A549 (cell line): ENCODE measurements at regions of chr9 and their contacts with region 1.

Region 1: GRCh38 chr9:129495534-129496325 is 125.2 kb downstream of the C9orf50 start:
- DNase-seq: peak; percentile 95 to 97
- ATAC-seq: peak; percentile 63 to 76
- H3K4me3 ChIP-seq: peak overlapping the region; percentile 63
- H3K27ac ChIP-seq: peak overlapping the region; percentile 99 to 100
- H3K4me1 ChIP-seq: peaks cover 86% of the 10 kb centered on the region
- CTCF ChIP-seq: no peak
- EP300 ChIP-seq: peak; percentile 27 to 42; a peak in 1 of 5 replicates
- POLR2A ChIP-seq: no peak; the same call in 1 of the 2 replicates
- RAD21 ChIP-seq: peak; percentile 14 to 50; a peak in 3 of 5 replicates

Region 2: DNA sequence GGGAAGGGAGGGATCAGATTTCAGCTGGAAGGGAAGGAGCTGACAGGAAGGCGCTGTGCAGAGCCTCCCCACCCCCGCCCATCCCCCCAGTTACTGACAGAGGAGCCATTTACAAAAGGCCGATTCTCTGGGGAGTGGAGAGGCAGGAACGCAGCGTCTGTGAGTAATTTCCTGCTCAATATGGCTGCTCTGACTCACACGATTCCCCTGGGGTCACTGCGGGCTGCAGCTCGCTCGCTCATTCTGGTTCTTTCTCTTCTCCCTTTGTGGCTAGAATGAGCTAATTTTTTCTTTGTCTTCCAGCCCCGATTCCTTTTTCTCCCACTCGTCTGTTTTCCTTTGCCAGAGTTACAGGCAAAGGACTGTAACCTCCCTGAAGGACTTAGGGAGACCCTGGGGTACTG is 355.7 kb before region 1 on chr9:
- CTCF ChIA-PET with region 1: interaction called, 17 read pairs
- POLR2A ChIA-PET with region 1: interaction called, 12 read pairs
- DNase-seq: peak; percentile 95 to 97
- ATAC-seq: peak; percentile 81 to 82
- H3K4me3 ChIP-seq: peak overlapping the region; percentile 44
- H3K27ac ChIP-seq: peak overlapping the region; percentile 99
- H3K4me1 ChIP-seq: peaks cover 60% of the 10 kb centered on the region
- CTCF ChIP-seq: no peak
- EP300 ChIP-seq: peak in 1 of 2 experiments; percentile 62; a peak in 1 of 5 replicates
- POLR2A ChIP-seq: peak; percentile 45
- RAD21 ChIP-seq: peak in 1 of 2 experiments; percentile 30; a peak in 2 of 5 replicates

Region 3: DNA sequence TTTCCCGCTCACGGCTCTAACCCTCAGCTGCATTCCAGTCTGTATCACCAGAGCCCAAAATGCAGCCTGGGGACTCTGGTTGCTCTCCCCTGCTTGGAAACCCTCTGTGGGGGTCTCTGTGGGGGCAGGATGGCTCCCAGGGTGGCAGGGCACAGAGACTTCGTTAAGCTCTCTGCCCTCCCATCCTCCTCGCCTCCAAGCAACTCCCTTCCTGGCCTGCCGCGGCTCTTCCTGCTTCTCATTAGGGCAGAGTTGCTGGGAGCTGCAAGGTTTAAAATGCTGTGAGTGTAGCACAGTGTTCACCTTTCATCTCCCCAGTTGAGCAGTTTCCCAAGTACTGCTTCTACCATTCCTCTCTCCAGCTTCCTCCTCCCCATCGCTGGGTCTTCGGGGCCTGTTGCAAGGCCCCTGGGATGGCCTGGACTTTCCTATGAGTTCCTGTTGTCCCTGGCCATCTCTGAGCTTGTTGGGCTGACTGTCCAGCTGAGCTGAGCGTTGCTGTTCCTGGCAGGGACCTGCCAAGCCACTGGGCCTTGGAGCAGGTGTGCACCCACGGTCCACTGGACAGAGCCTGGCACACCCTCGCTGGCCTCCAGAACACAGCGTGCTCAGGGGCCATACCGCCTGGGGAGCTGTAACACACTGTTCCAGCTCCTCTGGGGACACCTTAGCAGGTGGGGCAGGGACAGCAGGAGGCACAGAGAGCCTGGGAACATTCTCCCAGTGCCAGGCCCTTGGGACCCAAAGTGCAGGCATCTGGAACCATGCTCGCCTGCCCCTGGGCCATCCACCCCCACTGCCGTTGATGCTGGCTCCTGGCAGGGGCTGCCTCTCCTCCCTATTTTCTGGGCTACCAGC is 63.2 kb before region 1 on chr9:
- CTCF ChIA-PET with region 1: no interaction called
- POLR2A ChIA-PET with region 1: no interaction called
- DNase-seq: no peak
- ATAC-seq: no peak
- H3K4me3 ChIP-seq: no peak overlapping the region
- H3K27ac ChIP-seq: peak overlapping the region; percentile 61 to 69; a peak in 4 of 6 replicates
- H3K4me1 ChIP-seq: peaks cover 1% of the 10 kb centered on the region
- CTCF ChIP-seq: no peak
- EP300 ChIP-seq: no peak
- POLR2A ChIP-seq: no peak
- RAD21 ChIP-seq: no peak

Region 4: GRCh38 chr9:129460323-129461261 is 35.1 kb before region 1 on chr9:
- CTCF ChIA-PET with region 1: interaction called, 6 read pairs
- POLR2A ChIA-PET with region 1: interaction called, 17 read pairs
- DNase-seq: peak; percentile 97 to 99
- ATAC-seq: peak; percentile 87 to 88
- H3K4me3 ChIP-seq: peak overlapping the region; percentile 37
- H3K27ac ChIP-seq: peak overlapping the region; percentile 98
- H3K4me1 ChIP-seq: peaks cover 46% of the 10 kb centered on the region
- CTCF ChIP-seq: peak; percentile 16; the same call in 1 of the 3 replicates
- EP300 ChIP-seq: peak; percentile 28 to 37; a peak in 2 of 5 replicates
- POLR2A ChIP-seq: no peak; the same call in none of the 2 replicates
- RAD21 ChIP-seq: no peak; a peak in 2 of 5 replicates

Region 5: DNA sequence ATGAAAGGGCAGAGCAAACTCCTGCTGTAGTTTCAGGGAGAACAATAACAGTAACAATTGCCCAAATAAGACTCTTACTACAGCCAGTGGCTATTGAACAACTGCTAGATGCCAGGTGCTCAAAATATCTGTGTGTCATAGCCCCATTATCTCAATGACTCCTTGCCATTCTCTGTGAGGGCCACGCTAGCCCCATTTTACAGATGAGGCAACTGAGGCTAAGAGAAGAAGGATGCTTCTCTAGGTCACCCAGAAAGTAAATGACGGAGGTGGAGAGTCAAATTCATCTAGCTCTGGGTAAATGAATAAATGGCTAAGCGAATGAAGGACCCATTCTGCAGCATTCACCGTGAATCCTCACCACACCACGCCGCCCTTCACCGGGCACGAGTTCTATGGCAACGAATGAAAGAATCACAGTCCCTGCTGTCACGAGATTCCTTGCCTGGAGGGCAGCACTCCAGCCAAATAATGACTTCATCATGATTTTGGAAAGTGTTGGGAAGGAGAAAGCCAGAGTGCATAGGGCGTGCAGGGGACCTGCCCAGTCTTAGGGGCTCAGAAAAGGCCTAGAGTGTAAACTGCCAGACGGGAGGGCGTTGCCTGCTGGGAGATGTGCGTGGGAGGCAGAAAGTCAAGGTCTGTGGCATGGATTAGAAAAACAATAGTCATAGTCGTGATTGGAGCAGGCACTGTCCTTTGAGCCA is 22.1 kb before region 1 on chr9:
- CTCF ChIA-PET with region 1: no interaction called
- POLR2A ChIA-PET with region 1: no interaction called
- DNase-seq: no peak
- ATAC-seq: no peak
- H3K4me3 ChIP-seq: no peak overlapping the region
- H3K27ac ChIP-seq: peak overlapping the region; percentile 76 to 99; a peak in 5 of 6 replicates
- H3K4me1 ChIP-seq: peaks cover 57% of the 10 kb centered on the region
- CTCF ChIP-seq: no peak
- EP300 ChIP-seq: no peak
- POLR2A ChIP-seq: no peak
- RAD21 ChIP-seq: no peak

Region 6: DNA sequence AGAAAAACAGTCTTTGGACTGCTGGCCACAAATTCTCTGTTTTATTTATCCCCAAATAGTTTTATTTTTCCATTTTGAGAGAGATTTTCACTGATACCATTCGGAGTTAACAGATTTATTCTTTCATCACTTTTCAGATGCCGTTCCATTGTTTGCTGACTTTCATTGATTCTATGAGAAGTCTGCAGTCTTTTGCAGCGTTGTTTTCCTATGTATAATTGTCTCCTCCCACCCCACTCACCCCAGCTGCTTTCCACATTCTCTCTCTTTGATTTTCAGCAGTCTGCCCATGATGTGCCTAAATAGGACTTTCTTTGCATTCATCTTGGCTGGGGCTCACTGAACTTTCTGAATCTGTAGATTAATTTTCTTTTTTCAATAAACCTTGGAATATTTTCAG is 17.6 kb after region 1 on chr9:
- CTCF ChIA-PET with region 1: interaction called, 5 read pairs
- POLR2A ChIA-PET with region 1: interaction called, 11 read pairs
- DNase-seq: peak in 1 of 2 experiments; percentile 44
- ATAC-seq: no peak
- H3K4me3 ChIP-seq: no peak overlapping the region
- H3K27ac ChIP-seq: no peak overlapping the region
- H3K4me1 ChIP-seq: no peaks in the 10 kb centered on the region
- CTCF ChIP-seq: no peak
- EP300 ChIP-seq: no peak
- POLR2A ChIP-seq: no peak
- RAD21 ChIP-seq: no peak

Region 7: GRCh38 chr9:129569502-129570449 is 74.0 kb after region 1 on chr9:
- CTCF ChIA-PET with region 1: interaction called, 12 read pairs
- POLR2A ChIA-PET with region 1: interaction called, 44 read pairs
- DNase-seq: peak; percentile 70 to 90
- ATAC-seq: peak; percentile 38 to 48
- H3K4me3 ChIP-seq: no peak overlapping the region
- H3K27ac ChIP-seq: peak overlapping the region; percentile 99 to 100
- H3K4me1 ChIP-seq: peaks cover 48% of the 10 kb centered on the region
- CTCF ChIP-seq: peak; percentile 42
- EP300 ChIP-seq: no peak
- POLR2A ChIP-seq: peak; percentile 17; the same call in 1 of the 2 replicates
- RAD21 ChIP-seq: peak; percentile 27 to 44; a peak in 2 of 5 replicates